ENCODE measurements at regions of chr12 and their contacts with region 1.

Region 1: DNA sequence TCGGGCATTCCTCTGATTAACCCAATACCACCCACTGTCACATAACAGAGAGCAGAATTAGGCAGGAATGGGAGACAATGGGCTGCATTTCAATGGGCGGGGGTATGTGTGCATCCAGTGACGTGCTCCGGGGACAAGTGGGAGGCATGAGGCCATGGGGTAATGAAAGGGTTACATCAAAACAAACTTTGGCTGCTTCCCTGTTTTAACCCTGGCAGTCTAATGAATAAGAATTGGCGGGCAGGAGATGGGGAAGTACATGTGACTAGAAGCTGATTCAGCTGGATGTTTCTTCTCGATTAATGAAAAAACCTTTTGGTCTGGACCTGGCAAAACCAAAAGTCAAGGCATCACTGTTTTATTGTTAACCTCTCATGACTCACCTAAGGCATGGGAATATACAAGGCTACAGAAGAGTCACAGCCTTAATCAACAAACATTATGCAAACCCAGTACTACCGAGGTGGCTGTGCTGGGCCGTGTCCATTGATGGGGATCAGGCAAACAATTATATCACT is 44.2 kb downstream of the SOCS2 start:
- DNase-seq: no peak
- ATAC-seq: peak in 1 of 8 donors; percentile 23
- H3K4me3 ChIP-seq: no peak overlapping the region
- H3K27ac ChIP-seq: no peak overlapping the region
- H3K4me1 ChIP-seq: peaks cover 0 to 16% (median 0%) of the 10 kb centered on the region in 9 donors
- H3K27me3 ChIP-seq: no peaks in the 10 kb centered on the region
- CTCF ChIP-seq: no peak

Region 2: GRCh38 chr12:91877022-91877421 is 1739.6 kb before region 1 on chr12:
- intact Hi-C with region 1: loop called in 1 of 10 experiments (anchors 5 kb)
- DNase-seq: no peak
- ATAC-seq: peak in 6 of 8 donors; percentile 58 to 86 (median 73)
- H3K4me3 ChIP-seq: no peak overlapping the region
- H3K27ac ChIP-seq: peak overlapping the region in 3 of 10 donors; percentile 7 to 83 (median 12)
- H3K4me1 ChIP-seq: peaks cover 0 to 32% (median 0%) of the 10 kb centered on the region in 9 donors
- H3K27me3 ChIP-seq: no peaks in the 10 kb centered on the region
- CTCF ChIP-seq: no peak

Region 3: GRCh38 chr12:93663006-93663728 is 46.5 kb after region 1 on chr12:
- intact Hi-C with region 1: loop called in 2 of 10 experiments (anchors 5 to 10 kb)
- DNase-seq: no peak
- ATAC-seq: peak in 6 of 8 donors; percentile 26 to 78 (median 43)
- H3K4me3 ChIP-seq: no peak overlapping the region
- H3K27ac ChIP-seq: no peak overlapping the region
- H3K4me1 ChIP-seq: peaks cover 0 to 5% (median 0%) of the 10 kb centered on the region in 9 donors
- H3K27me3 ChIP-seq: no peaks in the 10 kb centered on the region
- CTCF ChIP-seq: no peak

Region 4: GRCh38 chr12:93668919-93669418 is 52.3 kb after region 1 on chr12:
- intact Hi-C with region 1: loop called in 2 of 10 experiments (anchors 5 to 10 kb)
- DNase-seq: no peak
- ATAC-seq: no peak
- H3K4me3 ChIP-seq: no peak overlapping the region
- H3K27ac ChIP-seq: no peak overlapping the region
- H3K4me1 ChIP-seq: peaks cover 0 to 6% (median 0%) of the 10 kb centered on the region in 9 donors
- H3K27me3 ChIP-seq: no peaks in the 10 kb centered on the region
- CTCF ChIP-seq: no peak